ENCODE measurements at regions of chr15 and their contacts with region 1.

Region 1: GRCh38 chr15:29651476-29652239 is 170.6 kb downstream of the TJP1 start:
- DNase-seq: no peak
- ATAC-seq: no peak
- H3K4me3 ChIP-seq: no peak overlapping the region
- H3K27ac ChIP-seq: no peak overlapping the region
- H3K4me1 ChIP-seq: no peaks in the 10 kb centered on the region
- H3K27me3 ChIP-seq: no peaks in the 10 kb centered on the region
- CTCF ChIP-seq: no peak

Region 2: DNA sequence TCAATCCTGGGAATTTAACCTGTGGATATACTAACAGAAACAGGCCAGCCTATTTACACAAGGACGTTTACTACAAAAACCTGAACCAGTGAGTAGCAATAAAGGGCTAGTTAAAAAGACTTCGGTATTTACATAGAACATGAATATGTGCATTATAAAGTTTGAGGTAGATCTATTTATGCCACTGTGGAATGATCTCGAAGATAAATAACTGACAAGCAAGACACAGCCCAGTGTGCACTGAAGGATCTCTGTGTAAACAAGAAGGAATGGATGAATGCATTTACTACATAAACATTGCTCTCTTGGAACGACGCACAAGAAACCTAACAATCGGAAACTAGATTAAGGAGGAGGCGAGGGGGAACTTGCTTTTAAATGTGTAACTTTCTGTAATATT is 250.0 kb before region 1 on chr15:
- CTCF ChIA-PET with region 1: no interaction called
- POLR2A ChIA-PET with region 1: no interaction called
- in situ Hi-C with region 1: no loop called
- intact Hi-C with region 1: no loop called
- DNase-seq: no peak
- ATAC-seq: no peak
- H3K4me3 ChIP-seq: no peak overlapping the region
- H3K27ac ChIP-seq: no peak overlapping the region
- H3K4me1 ChIP-seq: no peaks in the 10 kb centered on the region
- H3K27me3 ChIP-seq: no peaks in the 10 kb centered on the region
- CTCF ChIP-seq: no peak

Region 3: GRCh38 chr15:29449136-29449535 is 202.5 kb before region 1 on chr15:
- CTCF ChIA-PET with region 1: no interaction called
- POLR2A ChIA-PET with region 1: no interaction called
- in situ Hi-C with region 1: no loop called
- intact Hi-C with region 1: loop called (anchors 5 kb)
- DNase-seq: no peak
- ATAC-seq: no peak
- H3K4me3 ChIP-seq: no peak overlapping the region
- H3K27ac ChIP-seq: no peak overlapping the region
- H3K4me1 ChIP-seq: no peaks in the 10 kb centered on the region; the same call in 1 of the 2 replicates
- H3K27me3 ChIP-seq: no peaks in the 10 kb centered on the region
- CTCF ChIP-seq: no peak

Region 4: GRCh38 chr15:29568838-29569532 is 82.7 kb before region 1 on chr15:
- CTCF ChIA-PET with region 1: no interaction called
- POLR2A ChIA-PET with region 1: no interaction called
- in situ Hi-C with region 1: no loop called
- intact Hi-C with region 1: no loop called
- DNase-seq: no peak
- ATAC-seq: peak; percentile 87
- H3K4me3 ChIP-seq: no peak overlapping the region
- H3K27ac ChIP-seq: no peak overlapping the region
- H3K4me1 ChIP-seq: peaks cover 8% of the 10 kb centered on the region
- H3K27me3 ChIP-seq: peaks cover 35% of the 10 kb centered on the region
- CTCF ChIP-seq: peak; percentile 69

Region 5: DNA sequence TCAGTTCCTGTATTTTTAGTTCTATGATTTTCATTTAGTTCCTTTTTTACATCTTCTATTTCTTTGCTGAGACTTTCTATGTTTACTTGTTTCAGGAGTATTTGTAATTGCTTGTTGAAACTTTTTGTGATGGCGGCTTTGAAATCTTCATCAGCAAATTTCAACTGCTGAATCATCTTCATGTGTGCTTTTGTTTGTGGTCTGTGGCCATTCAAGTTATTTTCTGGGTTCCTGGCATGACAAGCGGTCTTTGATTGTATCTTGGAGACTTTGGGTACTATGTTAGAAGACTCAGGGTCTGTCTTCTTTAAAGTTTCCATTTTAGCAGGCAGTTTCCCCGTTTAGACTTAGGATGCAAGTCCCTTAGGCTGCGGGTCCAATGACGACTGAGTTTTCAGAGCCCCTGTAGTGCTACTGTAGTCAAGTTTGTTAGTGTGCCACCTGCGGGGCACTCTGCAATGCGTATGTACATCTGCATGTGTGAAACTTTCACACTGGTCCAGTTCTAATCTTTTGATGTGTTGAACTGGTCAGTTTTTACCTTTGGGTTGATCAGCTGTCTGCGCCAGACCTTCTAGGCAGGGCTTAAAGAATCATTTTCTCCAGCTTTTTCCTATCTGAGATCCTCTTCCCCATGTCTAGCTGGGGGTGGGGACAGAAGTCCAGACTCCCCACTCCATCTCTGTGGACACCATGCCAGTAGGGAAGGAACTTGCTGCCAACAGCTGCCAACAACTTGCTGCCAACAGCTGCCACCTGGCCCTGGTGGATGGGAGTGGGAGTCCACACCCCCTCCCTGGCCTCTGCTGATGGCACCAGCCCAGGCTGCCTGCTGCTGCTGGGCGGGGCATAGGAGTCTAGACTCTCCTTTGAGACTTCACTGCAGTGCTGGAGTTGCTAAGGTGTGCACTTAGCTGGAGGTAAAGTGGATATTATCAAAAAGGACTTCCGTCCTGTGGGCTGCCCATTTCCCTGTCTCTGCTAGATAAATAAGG is 20.3 kb before region 1 on chr15:
- CTCF ChIA-PET with region 1: no interaction called
- POLR2A ChIA-PET with region 1: no interaction called
- in situ Hi-C with region 1: no loop called
- intact Hi-C with region 1: no loop called
- DNase-seq: no peak
- ATAC-seq: no peak
- H3K4me3 ChIP-seq: no peak overlapping the region
- H3K27ac ChIP-seq: no peak overlapping the region
- H3K4me1 ChIP-seq: no peaks in the 10 kb centered on the region
- H3K27me3 ChIP-seq: peaks cover 3% of the 10 kb centered on the region; the same call in 1 of the 2 replicates
- CTCF ChIP-seq: no peak

Region 6: DNA sequence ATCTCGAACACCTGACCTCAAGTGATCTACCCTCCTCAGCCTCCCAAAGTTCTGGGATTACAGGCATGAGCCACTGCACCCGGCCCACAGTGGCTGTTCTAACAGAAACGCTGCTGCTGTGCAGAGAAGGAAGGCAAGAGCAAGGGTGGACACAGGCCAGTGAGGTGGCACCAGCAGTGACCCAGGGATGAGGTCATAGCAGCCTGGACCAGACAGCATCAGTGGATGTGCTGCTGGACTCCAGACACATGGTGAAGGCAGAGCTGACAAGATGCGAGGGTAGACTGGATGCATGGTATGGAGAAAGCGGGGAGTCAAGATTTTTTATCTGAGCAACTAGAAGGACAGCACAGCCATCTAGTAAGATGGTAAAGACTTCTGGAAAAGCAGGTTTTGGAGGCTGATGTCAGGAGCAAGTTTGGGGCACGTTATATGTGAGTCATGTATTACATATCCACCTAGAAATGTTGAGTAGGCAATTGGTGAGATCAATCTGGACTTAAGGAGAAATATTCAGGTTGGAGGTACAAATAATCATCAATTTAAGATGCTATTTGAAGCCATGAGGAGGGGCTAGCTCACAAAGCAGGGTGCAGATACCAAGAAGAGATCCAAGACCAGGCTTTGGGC is 192.7 kb after region 1 on chr15:
- CTCF ChIA-PET with region 1: no interaction called
- POLR2A ChIA-PET with region 1: no interaction called
- in situ Hi-C with region 1: no loop called
- intact Hi-C with region 1: no loop called
- DNase-seq: no peak
- ATAC-seq: no peak
- H3K4me3 ChIP-seq: no peak overlapping the region
- H3K27ac ChIP-seq: no peak overlapping the region
- H3K4me1 ChIP-seq: no peaks in the 10 kb centered on the region
- H3K27me3 ChIP-seq: no peaks in the 10 kb centered on the region; the same call in 1 of the 2 replicates
- CTCF ChIP-seq: no peak

Measured in Panc1 (cell line).